HAP-1 (cell line): ENCODE measurements at regions of chr22 and their contacts with region 1.

Region 1: GRCh38 chr22:19832476-19833108 is 22.1 kb downstream of the GNB1L start:
- DNase-seq: no peak
- H3K4me3 ChIP-seq: no peak overlapping the region
- H3K4me1 ChIP-seq: peaks cover 2% of the 10 kb centered on the region; the same call in 1 of the 2 replicates
- H3K27me3 ChIP-seq: no peaks in the 10 kb centered on the region

Region 2: DNA sequence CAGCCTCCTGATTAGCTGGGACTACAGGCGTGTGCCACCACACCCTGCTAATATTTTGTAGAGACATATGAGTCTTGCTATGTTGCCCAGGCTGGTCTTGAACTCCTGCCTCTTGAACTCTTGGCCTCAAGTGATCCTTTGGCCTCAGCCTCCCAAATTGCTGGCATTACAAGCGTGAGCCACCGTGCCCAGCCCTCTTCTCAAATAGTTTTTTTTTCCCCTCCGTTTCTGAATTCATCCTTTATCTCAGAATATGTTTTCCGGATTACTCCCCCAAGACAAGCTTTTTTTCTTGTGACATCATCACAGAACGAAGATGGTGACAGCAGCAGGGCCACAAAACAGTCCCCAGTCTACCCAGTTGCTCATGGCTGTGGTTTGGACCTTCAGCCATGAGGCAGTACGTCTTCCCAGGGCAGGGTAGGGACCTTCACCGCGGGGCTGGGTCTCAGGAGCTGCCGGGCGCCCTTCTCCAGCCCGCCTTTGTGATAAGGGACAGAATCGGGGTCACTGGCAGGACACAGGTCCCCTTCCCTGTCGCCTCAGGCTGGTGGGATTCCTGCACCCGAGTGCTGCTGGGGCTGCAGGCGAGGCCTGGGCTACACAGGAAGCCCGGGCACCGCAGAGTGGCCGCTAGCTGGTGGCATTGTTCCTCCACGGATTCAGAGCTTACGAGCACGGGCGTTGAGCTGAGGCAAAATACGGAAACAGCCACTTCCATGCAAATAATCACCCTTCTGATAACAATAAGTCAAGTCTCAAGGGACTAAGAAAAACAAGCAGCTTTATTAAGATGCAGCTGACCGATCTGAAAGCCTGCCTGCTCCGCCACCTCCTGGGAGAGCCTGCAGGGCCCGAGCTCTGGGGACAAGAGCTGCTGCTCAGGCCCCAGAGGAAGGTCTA is 59.9 kb before region 1 on chr22:
- in situ Hi-C with region 1: loop called (anchors 10 kb)
- DNase-seq: peak; percentile 73 to 74
- H3K4me3 ChIP-seq: no peak overlapping the region
- H3K4me1 ChIP-seq: peaks cover 6% of the 10 kb centered on the region
- H3K27me3 ChIP-seq: no peaks in the 10 kb centered on the region

Region 3: GRCh38 chr22:19787441-19788141 is 45.0 kb before region 1 on chr22:
- in situ Hi-C with region 1: no loop called
- DNase-seq: no peak
- H3K4me3 ChIP-seq: no peak overlapping the region
- H3K4me1 ChIP-seq: no peaks in the 10 kb centered on the region
- H3K27me3 ChIP-seq: no peaks in the 10 kb centered on the region

Region 4: DNA sequence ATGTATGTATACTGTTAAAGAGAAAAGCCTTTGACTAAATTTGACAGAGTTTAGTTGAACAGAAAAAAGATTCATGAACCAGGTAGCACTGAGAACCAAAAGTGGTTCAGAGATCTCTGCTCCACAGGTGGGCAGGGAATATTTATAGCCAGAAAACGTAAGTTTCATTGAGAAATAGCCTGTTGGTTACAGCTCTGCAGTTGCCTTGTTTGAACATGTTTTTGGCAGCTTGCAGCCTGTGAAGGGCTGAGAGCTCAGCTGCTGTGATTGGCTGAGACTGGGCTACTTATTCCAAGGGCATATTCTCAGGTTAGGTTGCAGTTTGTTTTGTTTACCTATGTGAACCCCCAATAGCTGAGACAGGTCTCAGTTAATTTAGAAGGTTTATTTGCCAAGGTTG is 547.9 kb after region 1 on chr22:
- in situ Hi-C with region 1: no loop called
- DNase-seq: no peak
- H3K4me3 ChIP-seq: no peak overlapping the region
- H3K4me1 ChIP-seq: no peaks in the 10 kb centered on the region
- H3K27me3 ChIP-seq: 0 out of 2 replicates have a peak, but pooled peaks cover 4% of the 10 kb centered on the region